Right cardiac atrium (tissue), 5 donors: ENCODE measurements at regions of chr13 and their contacts with region 1.

Region 1: GRCh38 chr13:104002216-104002615 is 936.0 kb upstream of the SLC10A2 start:
- DNase-seq: no peak
- ATAC-seq: no peak
- H3K4me3 ChIP-seq: no peak overlapping the region
- H3K27ac ChIP-seq: no peak overlapping the region
- H3K4me1 ChIP-seq: no peaks in the 10 kb centered on the region
- H3K27me3 ChIP-seq: no peaks in the 10 kb centered on the region

Region 2: DNA sequence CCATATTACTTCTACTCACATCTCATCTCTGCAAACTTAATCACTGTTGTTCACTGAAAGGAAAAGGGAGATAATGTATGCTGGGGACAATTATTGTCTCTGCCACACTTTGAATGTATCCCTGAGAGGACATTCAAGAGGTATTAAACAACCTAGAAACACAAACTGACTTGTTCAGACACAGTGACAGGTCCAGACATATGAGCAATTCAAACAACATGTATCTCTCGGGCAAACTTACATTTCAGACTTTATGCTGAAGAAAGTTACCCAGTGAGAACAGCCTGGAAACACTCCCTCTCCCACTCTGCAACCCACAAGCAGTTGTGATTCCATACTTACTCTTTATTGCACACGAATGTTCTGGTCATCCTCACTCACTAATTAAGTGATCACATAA is 32.7 kb after region 1 on chr13:
- intact Hi-C with region 1: loop called in 1 of 4 experiments (anchors 2 kb)
- DNase-seq: no peak
- ATAC-seq: no peak
- H3K4me3 ChIP-seq: no peak overlapping the region
- H3K27ac ChIP-seq: no peak overlapping the region
- H3K4me1 ChIP-seq: no peaks in the 10 kb centered on the region
- H3K27me3 ChIP-seq: no peaks in the 10 kb centered on the region

Region 3: DNA sequence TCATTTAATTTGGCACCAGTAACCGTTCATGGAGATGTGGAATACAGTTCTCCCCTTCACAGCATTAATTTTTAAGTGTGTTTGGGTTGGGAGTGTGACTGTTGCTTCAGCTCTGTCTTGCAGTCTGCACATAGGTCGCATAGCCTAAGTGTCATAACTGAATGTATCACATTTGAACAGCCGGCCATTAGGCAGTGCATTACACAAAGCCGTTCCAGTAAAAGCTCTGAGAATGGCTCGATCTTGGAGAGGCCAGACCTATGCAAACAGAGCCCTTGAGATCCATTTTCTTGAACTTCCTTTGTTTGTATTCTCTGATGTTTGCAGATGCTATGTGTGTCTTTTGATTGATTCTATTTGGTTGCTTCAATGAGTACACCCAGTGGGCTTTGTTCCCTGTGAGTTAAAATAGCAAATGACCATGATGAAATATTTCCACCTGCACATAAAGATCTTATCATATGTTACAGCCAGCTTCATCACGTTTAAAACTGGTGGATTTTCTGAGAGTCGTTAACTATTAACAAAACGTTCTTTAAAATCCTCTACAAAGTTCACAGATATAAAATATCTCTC is 168.9 kb after region 1 on chr13:
- intact Hi-C with region 1: no loop called
- DNase-seq: no peak
- ATAC-seq: no peak
- H3K4me3 ChIP-seq: no peak overlapping the region
- H3K27ac ChIP-seq: no peak overlapping the region
- H3K4me1 ChIP-seq: no peaks in the 10 kb centered on the region
- H3K27me3 ChIP-seq: no peaks in the 10 kb centered on the region